ENCODE measurements at regions of chr18 and their contacts with region 1.

Region 1: GRCh38 chr18:26383454-26384270 is 157.4 kb downstream of the TAF4B start:
- DNase-seq: peak; percentile 68
- H3K4me3 ChIP-seq: no peak overlapping the region
- H3K27ac ChIP-seq: no peak overlapping the region
- H3K4me1 ChIP-seq: no peaks in the 10 kb centered on the region
- CTCF ChIP-seq: peak; percentile 95

Region 2: DNA sequence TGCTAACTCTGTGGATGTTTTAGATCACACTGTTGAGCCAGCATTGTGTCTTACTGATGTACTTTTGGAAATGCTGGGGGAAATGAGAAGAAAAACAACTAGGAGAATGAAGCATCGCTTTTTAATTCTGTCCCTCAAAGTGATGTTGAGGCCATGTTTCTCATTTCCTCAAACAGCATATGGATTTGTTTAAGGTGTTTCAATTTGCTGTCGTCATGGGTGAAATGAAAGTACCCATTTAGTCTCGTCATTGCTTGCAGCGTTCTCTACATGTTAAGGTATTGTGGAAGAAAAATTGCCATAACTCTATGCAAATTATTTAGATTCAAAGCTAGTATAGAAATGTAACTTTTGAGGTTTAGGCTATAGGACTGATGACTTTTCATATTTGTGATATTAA is 13.4 kb after region 1 on chr18:
- CTCF ChIA-PET with region 1: no interaction called
- POLR2A ChIA-PET with region 1: no interaction called
- intact Hi-C with region 1: loop called (anchors 1 kb)
- DNase-seq: no peak
- H3K4me3 ChIP-seq: no peak overlapping the region
- H3K27ac ChIP-seq: no peak overlapping the region
- H3K4me1 ChIP-seq: no peaks in the 10 kb centered on the region
- CTCF ChIP-seq: no peak

Region 3: DNA sequence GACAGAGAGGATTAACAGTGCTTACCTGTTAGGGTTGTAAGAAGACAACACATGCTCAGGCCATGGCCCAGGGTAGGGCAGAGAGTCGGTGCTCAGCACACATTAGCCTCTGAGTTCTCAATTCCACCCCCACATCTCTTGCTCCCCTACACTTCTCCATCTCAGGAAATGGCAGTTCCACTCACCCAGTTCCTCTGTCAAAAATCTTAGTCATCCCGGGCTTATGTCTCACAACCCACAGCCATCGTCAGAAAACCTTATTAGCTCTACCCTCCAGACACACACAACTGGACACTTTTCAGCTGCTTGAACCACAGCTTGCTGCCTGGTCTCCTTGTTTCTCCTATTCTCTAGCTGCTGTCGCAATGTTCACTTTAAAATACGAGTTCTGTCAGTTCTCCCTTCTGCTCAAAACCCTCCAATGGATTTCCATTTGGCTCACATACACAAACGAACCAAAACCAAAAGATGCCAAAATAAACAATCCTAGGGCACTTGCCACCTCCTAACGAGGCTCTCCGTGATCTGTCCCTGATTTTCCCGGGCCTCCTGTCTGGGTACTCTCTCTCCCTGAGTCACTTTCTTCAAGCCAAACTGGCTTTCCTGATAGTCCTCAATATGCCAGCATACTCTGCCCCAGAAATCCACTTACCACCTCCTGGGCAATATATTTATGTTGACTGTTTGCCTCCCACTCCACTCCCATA is 75.0 kb after region 1 on chr18:
- CTCF ChIA-PET with region 1: interaction called, 3 read pairs
- POLR2A ChIA-PET with region 1: no interaction called
- intact Hi-C with region 1: loop called (anchors 5 kb)
- DNase-seq: no peak
- H3K4me3 ChIP-seq: no peak overlapping the region
- H3K27ac ChIP-seq: no peak overlapping the region
- H3K4me1 ChIP-seq: peaks cover 65% of the 10 kb centered on the region
- CTCF ChIP-seq: no peak

Region 4: GRCh38 chr18:26656944-26657536 is 273.4 kb after region 1 on chr18:
- CTCF ChIA-PET with region 1: no interaction called
- POLR2A ChIA-PET with region 1: no interaction called
- intact Hi-C with region 1: loop called (anchors 5 kb)
- DNase-seq: no peak
- H3K4me3 ChIP-seq: peak overlapping the region; percentile 38
- H3K27ac ChIP-seq: no peak overlapping the region
- H3K4me1 ChIP-seq: no peaks in the 10 kb centered on the region
- CTCF ChIP-seq: no peak

Region 5: GRCh38 chr18:26978812-26979341 is 595.2 kb after region 1 on chr18:
- CTCF ChIA-PET with region 1: no interaction called
- POLR2A ChIA-PET with region 1: no interaction called
- intact Hi-C with region 1: loop called (anchors 10 kb)
- DNase-seq: peak; percentile 77
- H3K4me3 ChIP-seq: peak overlapping the region; percentile 47
- H3K27ac ChIP-seq: peak overlapping the region; percentile 76
- H3K4me1 ChIP-seq: peaks cover 37% of the 10 kb centered on the region
- CTCF ChIP-seq: no peak

Measured in OCI-LY7 (cell line).